ENCODE measurements at regions of chr12 and their contacts with region 1.

Region 1: GRCh38 chr12:75480469-75480949 is at the start of gene GLIPR1:
- DNase-seq: peak; percentile 86
- ATAC-seq: peak; percentile 86
- H3K4me3 Mint-ChIP-seq: peak within 1 kb of the TSS; percentile 96
- H3K27ac Mint-ChIP-seq: peak within 1 kb of the TSS; percentile 98
- H3K4me1 Mint-ChIP-seq: peaks cover 80% of the 10 kb centered on the region
- H3K27me3 Mint-ChIP-seq: no peaks in the 10 kb centered on the region
- CTCF ChIP-seq: no peak
- total RNA-seq, gene GLIPR1: 15.9 to 18.6 TPM

Region 2: DNA sequence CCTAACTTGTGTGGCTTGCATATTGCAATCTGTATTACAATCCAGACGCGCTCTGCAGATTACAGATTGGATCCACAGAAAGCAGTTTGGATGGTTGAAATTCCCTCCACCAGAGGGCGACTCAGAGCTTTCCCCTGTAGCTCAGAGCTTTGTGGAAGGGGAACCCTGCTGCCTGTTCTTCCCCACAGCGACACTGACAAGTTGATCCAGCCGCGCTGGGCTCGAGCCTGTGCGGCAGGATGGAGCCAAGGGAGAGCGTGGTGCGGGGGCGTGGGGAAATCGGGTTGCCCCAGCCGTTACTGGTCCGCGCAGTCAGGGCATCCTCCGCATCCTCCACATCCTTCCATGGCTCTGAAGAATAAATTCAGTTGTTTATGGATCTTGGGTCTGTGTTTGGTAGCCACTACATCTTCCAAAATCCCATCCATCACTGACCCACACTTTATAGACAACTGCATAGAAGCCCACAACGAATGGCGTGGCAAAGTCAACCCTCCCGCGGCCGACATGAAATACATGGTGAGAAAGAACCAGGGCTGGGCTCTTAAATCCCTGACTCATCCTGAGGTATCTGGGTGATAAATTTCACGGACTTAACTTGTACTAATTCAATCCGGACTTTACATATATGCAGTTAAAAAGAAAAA is 146.0 kb before region 1 on chr12 and contains the start of gene GLIPR1L1:
- CTCF ChIA-PET with region 1: interaction called, 24 read pairs
- POLR2A ChIA-PET with region 1: interaction called, 4 read pairs
- intact Hi-C with region 1: loop called (anchors 5 kb)
- DNase-seq: peak; percentile 92
- ATAC-seq: peak; percentile 72
- H3K4me3 Mint-ChIP-seq: peak within 1 kb of the TSS; percentile 65
- H3K27ac Mint-ChIP-seq: no peak within 1 kb of the TSS
- H3K4me1 Mint-ChIP-seq: peaks cover 26% of the 10 kb centered on the region
- H3K27me3 Mint-ChIP-seq: peaks cover 27% of the 10 kb centered on the region
- CTCF ChIP-seq: peak; percentile 80
- total RNA-seq, gene GLIPR1L1: not detected

Region 3: DNA sequence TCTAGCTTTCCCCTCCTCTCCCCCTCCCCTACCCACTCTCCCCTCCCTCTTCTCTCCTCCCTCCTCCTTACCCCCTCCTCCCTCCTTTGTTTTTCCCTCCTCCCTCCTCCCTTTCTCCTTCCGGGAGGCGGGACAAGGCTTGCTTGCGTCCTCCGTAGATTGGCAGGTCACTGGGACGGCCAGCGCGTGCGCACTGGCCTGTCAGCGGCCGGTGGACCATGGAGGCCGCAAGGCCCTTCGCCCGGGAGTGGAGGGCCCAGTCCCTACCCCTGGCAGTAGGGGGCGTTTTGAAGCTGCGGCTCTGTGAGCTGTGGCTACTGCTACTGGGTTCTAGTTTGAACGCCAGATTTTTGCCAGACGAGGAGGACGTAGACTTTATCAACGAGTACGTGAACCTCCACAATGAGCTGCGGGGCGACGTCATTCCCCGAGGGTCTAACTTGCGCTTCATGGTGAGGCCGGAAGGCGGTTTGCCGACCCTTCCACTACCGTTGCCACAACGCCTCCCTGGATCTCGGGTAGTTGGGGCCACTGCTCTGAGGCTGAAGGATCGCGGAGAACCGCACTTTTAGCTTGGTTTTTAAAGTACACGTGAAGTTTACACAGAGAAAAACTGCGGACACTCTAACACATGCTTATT is 89.5 kb before region 1 on chr12 and contains the start of gene GLIPR1L2:
- CTCF ChIA-PET with region 1: interaction called, 28 read pairs
- POLR2A ChIA-PET with region 1: interaction called, 3 read pairs
- intact Hi-C with region 1: loop called (anchors 5 kb)
- DNase-seq: peak; percentile 93
- ATAC-seq: peak; percentile 97
- H3K4me3 Mint-ChIP-seq: peak within 1 kb of the TSS; percentile 87
- H3K27ac Mint-ChIP-seq: peak within 1 kb of the TSS; percentile 95
- H3K4me1 Mint-ChIP-seq: peaks cover 36% of the 10 kb centered on the region
- H3K27me3 Mint-ChIP-seq: no peaks in the 10 kb centered on the region
- CTCF ChIP-seq: peak; percentile 67
- total RNA-seq, gene GLIPR1L2: 0.27 to 0.43 TPM

Region 4: GRCh38 chr12:75505706-75506312 is 25.3 kb after region 1 on chr12:
- CTCF ChIA-PET with region 1: interaction called, 44 read pairs
- POLR2A ChIA-PET with region 1: interaction called, 7 read pairs
- intact Hi-C with region 1: loop called (anchors 1 kb)
- DNase-seq: no peak
- ATAC-seq: peak; percentile 70
- H3K4me3 Mint-ChIP-seq: no peak overlapping the region
- H3K27ac Mint-ChIP-seq: peak overlapping the region; percentile 57
- H3K4me1 Mint-ChIP-seq: peaks cover 35% of the 10 kb centered on the region
- H3K27me3 Mint-ChIP-seq: no peaks in the 10 kb centered on the region
- CTCF ChIP-seq: peak; percentile 74

Region 5: DNA sequence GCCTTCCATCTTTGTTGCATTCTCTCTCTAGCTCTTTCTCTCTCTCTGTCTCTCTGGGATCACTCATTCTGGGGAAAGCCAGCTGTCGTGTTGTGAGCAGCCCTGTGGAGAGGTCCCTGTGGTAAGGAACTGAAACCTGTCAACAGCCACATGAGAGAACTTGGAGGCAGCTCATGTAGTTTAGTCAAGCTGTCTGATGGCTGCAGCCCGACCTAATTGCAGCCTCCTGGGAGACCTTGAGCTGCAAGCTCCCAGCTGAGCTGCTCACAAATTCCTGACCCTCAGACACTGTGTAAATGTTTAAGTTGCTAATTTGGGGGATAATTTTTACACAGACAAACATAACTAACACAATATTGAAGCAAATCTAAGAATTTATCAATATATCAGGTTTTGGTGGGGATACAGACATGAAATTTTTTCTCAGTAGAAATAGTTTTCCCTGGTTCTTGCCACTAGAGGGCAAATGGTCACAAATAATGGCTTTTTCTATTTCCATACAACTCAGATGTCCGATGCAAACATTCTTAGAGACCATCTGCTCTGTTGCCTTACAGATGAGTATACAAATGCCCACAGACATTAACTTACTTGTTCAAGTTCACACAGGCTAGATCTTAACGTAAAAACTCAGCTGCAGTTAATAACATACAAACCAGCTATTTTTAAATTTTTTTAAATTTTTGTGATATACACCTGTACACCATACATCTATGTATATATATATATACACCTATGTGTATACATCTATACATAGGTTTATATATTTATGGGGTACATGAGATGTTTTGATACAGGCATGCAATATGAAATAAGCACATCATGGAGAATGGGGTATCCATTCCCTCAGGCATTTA is 46.4 kb after region 1 on chr12:
- CTCF ChIA-PET with region 1: interaction called, 14 read pairs
- POLR2A ChIA-PET with region 1: no interaction called
- intact Hi-C with region 1: no loop called
- DNase-seq: peak; percentile 39
- ATAC-seq: peak; percentile 66
- H3K4me3 Mint-ChIP-seq: no peak overlapping the region
- H3K27ac Mint-ChIP-seq: no peak overlapping the region
- H3K4me1 Mint-ChIP-seq: peaks cover 8% of the 10 kb centered on the region
- H3K27me3 Mint-ChIP-seq: peaks cover 28% of the 10 kb centered on the region
- CTCF ChIP-seq: peak; percentile 61

Region 6: GRCh38 chr12:75603475-75603874 is 123.0 kb after region 1 on chr12:
- CTCF ChIA-PET with region 1: no interaction called
- POLR2A ChIA-PET with region 1: no interaction called
- intact Hi-C with region 1: no loop called
- DNase-seq: no peak
- ATAC-seq: no peak
- H3K4me3 Mint-ChIP-seq: no peak overlapping the region
- H3K27ac Mint-ChIP-seq: no peak overlapping the region
- H3K4me1 Mint-ChIP-seq: no peaks in the 10 kb centered on the region
- H3K27me3 Mint-ChIP-seq: peaks cover 16% of the 10 kb centered on the region
- CTCF ChIP-seq: no peak